IMR-90 (cell line): ENCODE measurements at regions of chr6 and their contacts with region 1.

Region 1: GRCh38 chr6:54801669-54802068 is 44.9 kb upstream of the FAM83B start:
- DNase-seq: peak; percentile 93
- ATAC-seq: peak; percentile 28
- H3K4me3 ChIP-seq: no peak overlapping the region
- H3K27ac ChIP-seq: peak overlapping the region; percentile 23; the same call in 1 of the 2 replicates
- H3K4me1 ChIP-seq: peaks cover 13% of the 10 kb centered on the region
- H3K27me3 ChIP-seq: no peaks in the 10 kb centered on the region
- CTCF ChIP-seq: no peak
- POLR2A ChIP-seq: no peak
- RAD21 ChIP-seq: no peak

Region 2: GRCh38 chr6:54053881-54054391 is 747.7 kb before region 1 on chr6:
- CTCF ChIA-PET with region 1: no interaction called
- POLR2A ChIA-PET with region 1: no interaction called
- dilution Hi-C with region 1: no loop called
- in situ Hi-C with region 1: no loop called
- intact Hi-C with region 1: loop called (anchors 5 kb)
- DNase-seq: peak; percentile 90
- ATAC-seq: peak; percentile 95
- H3K4me3 ChIP-seq: no peak overlapping the region; the same call in 1 of the 2 replicates
- H3K27ac ChIP-seq: peak overlapping the region; percentile 1; the same call in 1 of the 2 replicates
- H3K4me1 ChIP-seq: peaks cover 2% of the 10 kb centered on the region; the same call in 1 of the 2 replicates
- H3K27me3 ChIP-seq: no peaks in the 10 kb centered on the region
- CTCF ChIP-seq: no peak
- POLR2A ChIP-seq: no peak
- RAD21 ChIP-seq: no peak

Region 3: DNA sequence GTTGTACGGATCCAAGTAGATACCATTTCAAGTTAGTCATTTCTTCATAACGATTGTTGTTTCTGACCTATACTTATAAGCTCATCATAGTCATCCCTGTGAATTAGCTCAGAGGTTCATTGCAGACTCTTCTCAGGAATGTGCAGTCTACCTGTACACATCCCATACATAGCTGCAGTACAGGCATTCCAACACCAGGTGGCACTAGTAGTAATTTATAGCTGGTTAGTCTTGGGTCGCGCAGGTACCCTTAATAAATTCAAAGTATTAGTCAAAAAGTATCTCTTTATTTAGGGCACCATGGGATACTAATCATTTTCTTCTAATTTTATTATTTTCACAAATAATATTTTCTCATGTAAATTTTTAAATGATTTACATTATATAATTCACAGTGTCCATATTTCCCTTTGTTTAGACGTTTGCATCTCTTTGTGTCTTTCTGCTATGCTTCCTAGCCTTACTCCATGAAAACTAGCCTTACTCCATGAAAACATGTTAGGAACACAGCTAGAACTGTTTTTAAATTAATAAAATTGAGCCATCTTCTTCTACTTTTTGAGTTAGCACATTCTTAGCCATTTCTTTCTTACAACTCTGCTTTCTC is 83.7 kb before region 1 on chr6:
- CTCF ChIA-PET with region 1: no interaction called
- POLR2A ChIA-PET with region 1: no interaction called
- dilution Hi-C with region 1: no loop called
- in situ Hi-C with region 1: no loop called
- intact Hi-C with region 1: loop called (anchors 2 kb)
- DNase-seq: peak; percentile 37
- ATAC-seq: peak; percentile 69; the same call in 1 of the 2 replicates
- H3K4me3 ChIP-seq: no peak overlapping the region
- H3K27ac ChIP-seq: no peak overlapping the region
- H3K4me1 ChIP-seq: peaks cover 2% of the 10 kb centered on the region; the same call in 1 of the 2 replicates
- H3K27me3 ChIP-seq: no peaks in the 10 kb centered on the region
- CTCF ChIP-seq: peak; percentile 63
- POLR2A ChIP-seq: no peak
- RAD21 ChIP-seq: peak; percentile 69